SK-N-SH (cell line): ENCODE measurements at regions of chr15 and their contacts with region 1.

Region 1: GRCh38 chr15:81480645-81481053 is 106.6 kb upstream of the TMC3 start:
- DNase-seq: peak; percentile 40
- H3K4me3 ChIP-seq: no peak overlapping the region; a peak in 1 of 4 replicates
- H3K27ac ChIP-seq: no peak overlapping the region
- H3K4me1 ChIP-seq: peaks cover 0 to 3% of the 10 kb centered on the region in 2 experiments; a peak in 1 of 4 replicates
- H3K27me3 ChIP-seq: no peaks in the 10 kb centered on the region
- CTCF ChIP-seq: peak; percentile 83
- EP300 ChIP-seq: no peak
- RAD21 ChIP-seq: peak; percentile 98

Region 2: DNA sequence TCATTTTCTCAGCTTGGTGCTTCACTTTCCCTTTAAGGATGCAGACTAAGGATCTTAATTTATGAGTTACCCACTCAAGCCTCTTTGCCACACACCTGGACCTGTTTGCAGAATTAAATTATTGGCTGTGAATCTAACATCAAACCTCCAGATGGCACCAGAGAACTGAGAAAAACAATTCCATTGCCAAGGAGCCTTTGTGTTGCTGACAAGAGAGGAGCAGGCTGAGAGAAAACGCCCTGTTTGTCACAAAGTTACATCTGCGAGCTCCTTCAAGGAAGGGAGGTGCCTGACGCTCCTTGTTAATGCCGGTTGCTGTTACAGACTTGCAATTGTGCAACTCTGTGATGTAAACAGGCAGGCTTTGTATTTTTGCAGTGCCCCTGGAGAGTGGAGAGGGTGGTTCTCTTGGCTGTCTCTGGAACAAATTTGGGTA is 70.3 kb before region 1 on chr15:
- CTCF ChIA-PET with region 1: interaction called, 18 read pairs
- POLR2A ChIA-PET with region 1: no interaction called
- DNase-seq: peak; percentile 57
- H3K4me3 ChIP-seq: no peak overlapping the region; a peak in 1 of 4 replicates
- H3K27ac ChIP-seq: no peak overlapping the region
- H3K4me1 ChIP-seq: peaks cover 0 to 17% of the 10 kb centered on the region in 2 experiments; a peak in 2 of 4 replicates
- H3K27me3 ChIP-seq: no peaks in the 10 kb centered on the region
- CTCF ChIP-seq: peak; percentile 70
- EP300 ChIP-seq: no peak
- RAD21 ChIP-seq: peak; percentile 91

Region 3: DNA sequence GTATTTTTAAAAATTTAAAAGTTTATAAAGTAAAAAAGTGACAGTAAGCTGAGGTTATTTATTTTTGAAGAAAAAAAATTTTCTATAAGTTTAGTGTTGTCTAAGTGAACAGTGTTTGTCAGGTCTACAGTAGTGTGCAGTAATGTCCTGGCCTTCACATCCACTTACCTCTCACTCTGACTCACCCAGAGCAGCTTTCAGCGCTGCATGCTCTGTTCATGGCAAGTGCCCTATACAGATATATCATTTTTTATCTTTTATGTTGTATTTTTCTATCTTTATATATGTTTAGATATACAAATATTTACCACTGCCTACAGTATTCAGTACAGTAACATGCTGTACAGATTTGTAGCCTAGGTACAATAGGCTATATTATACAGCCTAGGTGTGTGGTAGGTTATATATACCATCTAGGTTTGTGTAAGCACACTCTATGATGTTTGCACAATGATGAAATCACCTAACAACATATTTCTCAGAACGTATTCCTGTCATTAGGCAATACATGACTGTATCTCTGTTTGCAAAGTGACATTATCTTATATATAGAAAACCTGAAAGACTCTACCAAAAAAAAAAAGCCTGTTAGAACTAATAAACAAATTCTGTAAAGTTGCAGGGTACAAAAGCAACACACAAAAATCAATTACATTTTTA is 30.7 kb before region 1 on chr15:
- CTCF ChIA-PET with region 1: no interaction called
- POLR2A ChIA-PET with region 1: no interaction called
- DNase-seq: no peak
- H3K4me3 ChIP-seq: no peak overlapping the region
- H3K27ac ChIP-seq: no peak overlapping the region
- H3K4me1 ChIP-seq: no peaks in the 10 kb centered on the region
- H3K27me3 ChIP-seq: no peaks in the 10 kb centered on the region
- CTCF ChIP-seq: no peak
- EP300 ChIP-seq: no peak
- RAD21 ChIP-seq: no peak

Region 4: DNA sequence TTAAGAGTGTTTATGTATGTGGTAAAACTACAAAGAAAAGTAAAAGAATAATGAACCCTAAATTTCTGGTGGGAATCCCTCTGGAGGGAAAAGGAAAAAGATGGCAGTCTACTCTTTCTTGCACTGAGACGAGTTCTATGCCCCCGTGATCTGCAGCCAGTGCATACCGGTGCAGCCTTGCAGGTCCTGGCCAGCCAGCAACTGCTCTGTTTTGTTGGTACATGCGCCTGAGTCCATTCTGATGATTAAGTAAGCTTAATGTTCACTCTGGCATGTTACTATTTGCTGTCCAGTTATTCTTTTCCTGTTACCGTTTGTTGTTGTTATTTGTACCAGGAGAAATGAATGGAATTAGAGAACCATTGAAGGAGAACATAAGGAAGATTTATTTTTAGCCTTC is 11.5 kb before region 1 on chr15:
- CTCF ChIA-PET with region 1: interaction called, 17 read pairs
- POLR2A ChIA-PET with region 1: no interaction called
- DNase-seq: no peak
- H3K4me3 ChIP-seq: no peak overlapping the region
- H3K27ac ChIP-seq: no peak overlapping the region
- H3K4me1 ChIP-seq: no peaks in the 10 kb centered on the region
- H3K27me3 ChIP-seq: no peaks in the 10 kb centered on the region
- CTCF ChIP-seq: no peak
- EP300 ChIP-seq: no peak
- RAD21 ChIP-seq: no peak

Region 5: GRCh38 chr15:81547521-81548132 is 67.0 kb after region 1 on chr15:
- CTCF ChIA-PET with region 1: no interaction called
- POLR2A ChIA-PET with region 1: no interaction called
- DNase-seq: no peak
- H3K4me3 ChIP-seq: no peak overlapping the region
- H3K27ac ChIP-seq: no peak overlapping the region
- H3K4me1 ChIP-seq: no peaks in the 10 kb centered on the region
- H3K27me3 ChIP-seq: no peaks in the 10 kb centered on the region
- CTCF ChIP-seq: no peak
- EP300 ChIP-seq: no peak
- RAD21 ChIP-seq: no peak

Region 6: GRCh38 chr15:81633889-81634288 is 153.2 kb after region 1 on chr15:
- CTCF ChIA-PET with region 1: no interaction called
- POLR2A ChIA-PET with region 1: no interaction called
- DNase-seq: no peak
- H3K4me3 ChIP-seq: no peak overlapping the region
- H3K27ac ChIP-seq: no peak overlapping the region
- H3K4me1 ChIP-seq: no peaks in the 10 kb centered on the region
- H3K27me3 ChIP-seq: no peaks in the 10 kb centered on the region
- CTCF ChIP-seq: no peak
- EP300 ChIP-seq: no peak
- RAD21 ChIP-seq: no peak

Region 7: GRCh38 chr15:81752546-81752942 is 271.9 kb after region 1 on chr15:
- CTCF ChIA-PET with region 1: interaction called, 12 read pairs
- POLR2A ChIA-PET with region 1: no interaction called
- DNase-seq: peak; percentile 75
- H3K4me3 ChIP-seq: no peak overlapping the region
- H3K27ac ChIP-seq: peak overlapping the region in 1 of 2 experiments; percentile 96; a peak in 2 of 4 replicates
- H3K4me1 ChIP-seq: peaks cover 0 to 47% of the 10 kb centered on the region in 2 experiments
- H3K27me3 ChIP-seq: no peaks in the 10 kb centered on the region
- CTCF ChIP-seq: no peak
- EP300 ChIP-seq: peak in 1 of 2 experiments; percentile 89; a peak in 2 of 4 replicates
- RAD21 ChIP-seq: peak; percentile 27

Region 8: GRCh38 chr15:81809543-81809942 is 328.9 kb after region 1 on chr15:
- CTCF ChIA-PET with region 1: interaction called, 17 read pairs
- POLR2A ChIA-PET with region 1: no interaction called
- DNase-seq: peak; percentile 33
- H3K4me3 ChIP-seq: no peak overlapping the region
- H3K27ac ChIP-seq: no peak overlapping the region
- H3K4me1 ChIP-seq: no peaks in the 10 kb centered on the region; a peak in 1 of 4 replicates
- H3K27me3 ChIP-seq: no peaks in the 10 kb centered on the region
- CTCF ChIP-seq: peak; percentile 45; the same call in 1 of the 2 replicates
- EP300 ChIP-seq: no peak
- RAD21 ChIP-seq: peak; percentile 64

Region 9: DNA sequence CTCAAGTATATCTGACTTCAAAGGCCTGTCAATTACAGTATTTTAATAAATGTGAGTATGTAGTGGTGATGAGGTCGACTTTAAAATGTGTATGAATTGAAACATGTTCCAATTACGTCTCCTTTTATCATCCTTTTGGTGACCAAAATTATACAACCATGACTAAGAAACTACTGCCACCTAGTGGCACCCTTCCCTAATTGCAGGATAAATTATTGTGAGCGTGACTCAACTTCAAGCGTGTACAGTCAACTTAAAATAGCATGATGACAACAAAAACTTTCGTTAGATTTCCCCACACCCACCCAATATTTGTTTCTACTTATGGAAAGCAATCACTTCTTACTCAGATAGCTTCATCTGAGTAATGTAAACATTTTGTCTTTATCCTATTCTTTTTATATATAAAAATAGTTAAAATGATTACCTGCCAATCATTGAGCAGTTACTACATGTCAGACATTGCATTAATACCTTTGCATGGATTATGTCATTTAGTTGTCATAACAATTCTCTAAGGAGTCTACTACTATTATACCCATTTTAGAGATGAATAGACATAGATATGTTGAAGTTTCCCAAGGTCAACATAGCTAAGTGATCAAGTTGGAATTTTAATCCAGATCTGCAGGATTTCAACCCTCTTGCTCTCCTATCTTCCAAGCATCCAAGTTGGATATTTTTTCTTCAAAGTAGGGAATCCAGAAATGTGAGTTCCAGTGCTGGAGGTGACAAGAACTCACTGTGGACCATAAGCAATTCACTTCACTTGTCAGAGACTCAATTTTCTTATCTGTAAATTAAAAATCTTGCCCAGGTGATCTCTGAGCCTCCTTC is 459.2 kb after region 1 on chr15:
- CTCF ChIA-PET with region 1: interaction called, 12 read pairs
- POLR2A ChIA-PET with region 1: no interaction called
- DNase-seq: peak; percentile 42
- H3K4me3 ChIP-seq: no peak overlapping the region
- H3K27ac ChIP-seq: no peak overlapping the region
- H3K4me1 ChIP-seq: peaks cover 0 to 4% of the 10 kb centered on the region in 2 experiments; a peak in 2 of 4 replicates
- H3K27me3 ChIP-seq: no peaks in the 10 kb centered on the region
- CTCF ChIP-seq: peak; percentile 71
- EP300 ChIP-seq: no peak
- RAD21 ChIP-seq: peak; percentile 79

Region 10: GRCh38 chr15:82046666-82047452 is 566.2 kb after region 1 on chr15:
- CTCF ChIA-PET with region 1: interaction called, 22 read pairs
- POLR2A ChIA-PET with region 1: no interaction called
- DNase-seq: peak; percentile 97
- H3K4me3 ChIP-seq: peak overlapping the region; percentile 78 to 99
- H3K27ac ChIP-seq: peak overlapping the region; percentile 93 to 99
- H3K4me1 ChIP-seq: peaks cover 6 to 23% of the 10 kb centered on the region in 2 experiments; a peak in 2 of 4 replicates
- H3K27me3 ChIP-seq: no peaks in the 10 kb centered on the region
- CTCF ChIP-seq: peak; percentile 69
- EP300 ChIP-seq: no peak
- RAD21 ChIP-seq: peak; percentile 76